ENCODE measurements at regions of chr17 and their contacts with region 1.

Region 1: GRCh38 chr17:79237448-79238053 is 162.9 kb downstream of the ENGASE start:
- DNase-seq: no peak
- H3K4me3 ChIP-seq: no peak overlapping the region
- H3K27ac ChIP-seq: no peak overlapping the region
- H3K4me1 ChIP-seq: no peaks in the 10 kb centered on the region
- H3K27me3 ChIP-seq: no peaks in the 10 kb centered on the region
- CTCF ChIP-seq: no peak
- EP300 ChIP-seq: no peak
- POLR2A ChIP-seq: no peak
- RAD21 ChIP-seq: no peak

Region 2: DNA sequence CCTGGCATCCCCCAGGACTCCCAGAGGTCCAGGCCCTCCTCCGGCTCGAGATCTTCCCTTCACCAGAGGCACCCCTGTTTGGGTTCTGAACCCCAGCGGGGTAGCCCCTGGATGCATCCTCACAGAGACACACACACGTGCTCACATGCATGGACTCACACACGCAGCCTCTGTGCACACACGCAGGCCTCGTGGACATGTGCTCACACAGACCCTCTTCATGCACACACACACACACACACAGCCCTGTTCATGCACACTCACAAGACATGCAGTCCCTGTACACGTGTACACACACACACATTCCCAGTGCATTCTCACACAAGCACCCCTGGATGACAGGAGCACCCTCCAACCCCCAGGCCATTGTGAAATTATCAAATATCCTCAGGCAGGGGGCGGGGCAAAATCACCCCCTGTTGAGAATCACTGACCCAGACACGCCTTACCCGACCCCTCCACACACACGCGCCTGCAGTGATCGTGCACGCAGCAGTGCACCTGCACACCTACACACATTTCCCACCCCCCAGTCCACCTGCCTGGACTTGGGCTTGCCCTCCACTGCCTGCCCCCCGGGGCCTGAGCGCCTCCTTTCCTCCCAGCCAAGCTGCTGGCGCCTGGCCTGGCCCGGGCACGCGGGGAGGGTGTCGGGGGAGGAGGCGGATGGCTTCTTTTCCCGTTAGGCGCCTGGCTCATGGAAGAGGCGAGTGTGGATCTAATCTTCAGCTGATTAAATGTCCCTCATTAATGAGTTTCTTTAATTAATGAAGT is 100.3 kb before region 1 on chr17:
- CTCF ChIA-PET with region 1: no interaction called
- POLR2A ChIA-PET with region 1: no interaction called
- DNase-seq: no peak
- H3K4me3 ChIP-seq: no peak overlapping the region
- H3K27ac ChIP-seq: no peak overlapping the region
- H3K4me1 ChIP-seq: no peaks in the 10 kb centered on the region; a peak in 3 of 7 replicates
- H3K27me3 ChIP-seq: no peaks in the 10 kb centered on the region
- CTCF ChIP-seq: no peak
- EP300 ChIP-seq: no peak
- POLR2A ChIP-seq: no peak
- RAD21 ChIP-seq: no peak

Region 3: DNA sequence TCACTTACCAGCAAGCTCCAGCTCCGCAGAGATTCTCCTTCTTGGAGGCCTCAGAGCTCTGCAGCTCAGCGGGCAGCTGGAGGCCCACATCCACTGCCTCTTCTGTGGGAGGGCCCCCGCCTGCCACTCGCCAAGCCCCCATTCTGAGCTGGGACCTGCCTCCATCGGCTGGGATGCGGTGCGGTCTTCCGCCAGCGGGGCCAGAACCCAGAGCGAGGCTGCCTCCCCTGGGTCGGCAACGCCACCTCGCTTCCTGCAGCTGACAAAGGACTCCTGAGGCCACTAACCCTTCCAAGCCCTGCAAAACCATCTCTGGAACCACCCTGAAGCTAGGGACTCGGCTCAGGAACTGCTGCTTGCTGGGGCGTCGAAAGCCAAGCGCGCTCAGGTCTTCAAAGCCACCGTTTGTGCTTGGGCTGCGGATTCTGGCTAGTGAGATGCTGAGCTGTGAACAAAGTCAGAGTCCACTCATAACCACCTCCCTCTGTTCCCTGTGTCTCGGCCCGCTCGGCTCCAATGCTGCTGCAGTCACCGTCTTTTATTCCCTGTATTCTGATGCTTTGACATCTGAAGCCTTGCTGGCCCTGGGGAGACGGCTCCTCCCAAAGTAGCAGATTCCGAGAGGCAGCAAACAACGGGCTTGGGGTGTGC is 11.4 kb after region 1 on chr17:
- CTCF ChIA-PET with region 1: interaction called, 11 read pairs
- POLR2A ChIA-PET with region 1: interaction called, 3 read pairs
- DNase-seq: no peak
- H3K4me3 ChIP-seq: no peak overlapping the region
- H3K27ac ChIP-seq: no peak overlapping the region
- H3K4me1 ChIP-seq: peaks cover 0 to 10% (median under 1%) of the 10 kb centered on the region in 4 experiments; a peak in 1 of 7 replicates
- H3K27me3 ChIP-seq: peaks cover 0 to 5% (median 0%) of the 10 kb centered on the region in 4 experiments; a peak in 1 of 7 replicates
- CTCF ChIP-seq: peak in 2 of 3 experiments; percentile 1 to 10; a peak in 1 of 4 replicates
- EP300 ChIP-seq: no peak
- POLR2A ChIP-seq: no peak
- RAD21 ChIP-seq: peak; percentile 9 to 20; a peak in 1 of 4 replicates

Measured in H1 (cell line).